Gastrocnemius medialis (tissue), 4 donors: ENCODE measurements at regions of chr1 and their contacts with region 1.

Region 1: DNA sequence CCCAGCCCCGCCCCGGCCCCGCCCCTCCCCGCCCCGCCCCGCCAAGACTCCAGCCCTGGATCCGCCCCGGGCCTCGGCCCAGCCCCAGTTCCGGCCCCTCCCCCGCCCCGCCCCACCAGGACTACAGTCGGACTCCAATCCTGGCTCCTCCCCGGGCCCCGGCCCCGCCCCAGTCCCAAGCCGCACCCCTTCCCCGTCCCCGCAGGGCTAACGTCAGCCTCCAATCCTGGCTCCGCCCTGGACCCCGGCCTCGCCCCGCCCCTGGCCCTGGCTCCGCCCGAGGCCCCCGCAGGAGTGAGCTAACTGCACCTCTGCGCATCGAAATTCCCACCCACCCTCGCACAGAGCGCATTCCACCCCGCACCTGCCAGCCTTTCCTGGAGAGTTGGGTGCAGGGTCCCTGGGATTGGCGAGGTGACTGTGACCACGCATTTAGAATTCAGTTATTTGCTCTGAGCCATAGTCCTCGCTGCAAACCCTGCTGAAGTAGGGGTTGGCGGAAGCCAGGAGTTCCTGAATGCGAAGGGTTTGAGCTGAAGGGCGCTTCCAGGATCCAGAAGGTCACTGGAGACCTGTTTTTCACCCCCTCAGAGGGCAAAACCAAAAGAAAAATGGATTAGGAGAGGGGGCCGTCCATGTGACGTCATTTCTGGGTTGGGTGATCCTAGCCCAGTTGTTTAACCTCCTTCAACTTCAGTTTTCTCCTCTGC is 588 bp upstream of the IGSF8 start:
- DNase-seq: peak; percentile 97 to 98
- ATAC-seq: peak; percentile 53 to 59
- H3K4me3 ChIP-seq: peak overlapping the region; percentile 49 to 77 (median 66)
- H3K27ac ChIP-seq: peak overlapping the region; percentile 88 to 96 (median 94)
- H3K4me1 ChIP-seq: peaks cover 44 to 47% of the 10 kb centered on the region in 2 donors
- H3K27me3 ChIP-seq: no peaks in the 10 kb centered on the region
- CTCF ChIP-seq: no peak
- POLR2A ChIP-seq: peak; percentile 21 to 42

Region 2: GRCh38 chr1:159853417-159854115 is 245.4 kb before region 1 on chr1:
- in situ Hi-C with region 1: no loop called
- intact Hi-C with region 1: no loop called
- DNase-seq: no peak
- ATAC-seq: no peak
- H3K4me3 ChIP-seq: peak overlapping the region; percentile 69 to 99 (median 82)
- H3K27ac ChIP-seq: peak overlapping the region; percentile 82 to 95 (median 89)
- H3K4me1 ChIP-seq: peaks cover 8 to 14% of the 10 kb centered on the region in 2 donors
- H3K27me3 ChIP-seq: no peaks in the 10 kb centered on the region
- CTCF ChIP-seq: no peak
- POLR2A ChIP-seq: no peak

Region 3: GRCh38 chr1:160161965-160162705 is 63.1 kb after region 1 on chr1:
- in situ Hi-C with region 1: no loop called
- intact Hi-C with region 1: loop called (anchors 5 kb)
- DNase-seq: no peak
- ATAC-seq: peak; percentile 60 to 71
- H3K4me3 ChIP-seq: no peak overlapping the region
- H3K27ac ChIP-seq: no peak overlapping the region
- H3K4me1 ChIP-seq: no peaks in the 10 kb centered on the region
- H3K27me3 ChIP-seq: no peaks in the 10 kb centered on the region
- CTCF ChIP-seq: peak in 4 of 5 experiments; percentile 39 to 63 (median 40)
- POLR2A ChIP-seq: no peak

Region 4: GRCh38 chr1:160251687-160252526 is 152.9 kb after region 1 on chr1:
- in situ Hi-C with region 1: loop called in 3 of 4 experiments (anchors 5 to 10 kb)
- intact Hi-C with region 1: loop called (anchors 1 kb)
- DNase-seq: peak; percentile 64 to 73
- ATAC-seq: peak; percentile 95 to 98
- H3K4me3 ChIP-seq: no peak overlapping the region
- H3K27ac ChIP-seq: peak overlapping the region; percentile 61 to 86 (median 81)
- H3K4me1 ChIP-seq: peaks cover 56 to 57% of the 10 kb centered on the region in 2 donors
- H3K27me3 ChIP-seq: no peaks in the 10 kb centered on the region
- CTCF ChIP-seq: peak; percentile 68 to 86 (median 77)
- POLR2A ChIP-seq: no peak

Region 5: DNA sequence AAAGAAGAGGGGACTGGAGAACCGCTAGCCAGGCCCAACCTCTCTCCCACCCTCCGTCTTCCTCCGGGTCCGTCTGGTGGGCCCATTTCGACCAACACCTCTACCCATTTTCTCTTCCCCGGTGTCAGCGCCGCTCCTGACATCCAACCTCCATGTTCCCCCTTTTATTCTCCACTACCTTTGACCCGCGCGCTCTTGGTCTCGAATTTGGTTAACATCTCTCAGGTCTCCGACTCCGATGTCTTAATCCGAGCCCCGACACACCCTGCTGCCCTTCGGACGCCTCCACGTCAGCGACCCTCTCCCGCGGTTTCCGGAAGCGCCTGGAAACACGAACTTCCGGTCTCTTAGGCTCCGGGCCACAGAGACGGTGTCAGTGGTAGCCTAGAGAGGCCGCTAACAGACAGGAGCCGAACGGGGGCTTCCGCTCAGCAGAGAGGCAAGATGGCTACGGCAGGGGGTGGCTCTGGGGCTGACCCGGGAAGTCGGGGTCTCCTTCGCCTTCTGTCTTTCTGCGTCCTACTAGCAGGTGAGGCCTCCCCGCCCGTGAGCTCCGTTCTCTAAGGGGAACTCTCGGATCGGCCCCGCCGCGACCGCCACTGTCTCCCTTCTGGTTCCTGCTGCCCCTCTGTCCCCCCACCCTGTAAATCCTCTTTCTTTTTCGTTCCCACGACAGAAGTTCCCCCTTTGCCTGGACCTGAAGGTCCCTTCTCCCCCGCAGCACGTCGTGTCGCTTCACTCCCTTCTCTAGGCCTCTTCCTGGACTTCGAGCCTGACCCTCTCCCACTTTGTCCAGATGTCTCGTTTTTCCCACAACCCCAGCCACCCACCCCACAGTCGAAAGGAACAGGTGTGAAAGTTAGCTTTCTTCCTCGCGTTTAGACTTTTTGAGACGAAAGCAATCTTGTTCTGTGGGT is 244.2 kb after region 1 on chr1 and contains the starts of genes COPA and NCSTN:
- in situ Hi-C with region 1: no loop called
- intact Hi-C with region 1: loop called (anchors 5 kb)
- DNase-seq: peak; percentile 92
- ATAC-seq: peak; percentile 99 to 100
- H3K4me3 ChIP-seq: peak within 1 kb of the TSS; percentile 77 to 96 (median 86)
- H3K27ac ChIP-seq: peak within 1 kb of the TSS; percentile 89 to 96 (median 96)
- H3K4me1 ChIP-seq: peaks cover 30 to 39% of the 10 kb centered on the region in 2 donors
- H3K27me3 ChIP-seq: no peaks in the 10 kb centered on the region
- CTCF ChIP-seq: peak in 2 of 5 experiments; percentile 24 to 31
- POLR2A ChIP-seq: peak; percentile 86 to 93
- total RNA-seq, gene COPA: 59.0 to 103 (median 85.9) TPM
- total RNA-seq, gene NCSTN: 29.2 to 59.3 (median 33.2) TPM